H1 (cell line): ENCODE measurements at regions of chr14 and their contacts with region 1.

Region 1: GRCh38 chr14:70096866-70097265 is 91.9 kb downstream of the SLC8A3 start:
- DNase-seq: no peak
- H3K4me3 ChIP-seq: no peak overlapping the region
- H3K27ac ChIP-seq: no peak overlapping the region
- H3K4me1 ChIP-seq: peaks cover 0 to 7% (median under 1%) of the 10 kb centered on the region in 4 experiments; a peak in 2 of 7 replicates
- H3K27me3 ChIP-seq: no peaks in the 10 kb centered on the region
- CTCF ChIP-seq: peak; percentile 64 to 86 (median 74)
- EP300 ChIP-seq: no peak
- POLR2A ChIP-seq: no peak
- RAD21 ChIP-seq: peak; percentile 73 to 86

Region 2: DNA sequence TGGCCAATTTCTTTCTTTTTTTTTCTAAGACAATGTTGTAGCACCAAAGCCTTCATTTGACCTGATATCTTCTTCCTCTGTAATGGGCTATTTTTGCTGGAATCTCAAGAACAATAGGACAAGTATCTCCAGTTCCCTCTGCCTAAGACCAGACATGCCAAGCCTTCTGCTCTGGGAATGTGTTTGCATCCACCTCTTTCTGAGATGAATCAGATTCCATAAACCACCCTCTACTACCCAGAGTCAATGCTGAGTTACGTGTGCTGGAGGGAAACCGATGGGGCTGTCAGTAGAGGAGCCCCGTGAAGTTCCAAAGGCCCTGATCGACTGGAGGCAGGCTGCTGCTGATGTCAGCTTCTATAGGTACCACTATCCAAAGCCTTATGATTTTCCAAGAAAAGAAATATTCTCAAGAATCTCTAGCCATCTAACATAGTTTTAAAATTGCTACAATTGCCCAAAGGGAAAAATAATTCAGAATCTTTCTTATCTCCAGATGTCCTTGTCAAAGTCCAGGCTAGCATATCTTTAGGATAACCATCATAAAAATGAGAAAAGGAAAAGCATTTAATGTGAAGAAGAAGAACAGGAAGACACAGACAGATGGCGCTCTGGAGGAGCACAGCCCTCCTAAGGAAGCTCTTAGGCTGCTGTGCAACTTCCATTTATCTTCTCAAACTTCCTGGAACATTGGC is 10.0 kb before region 1 on chr14:
- CTCF ChIA-PET with region 1: interaction called, 28 read pairs
- POLR2A ChIA-PET with region 1: no interaction called
- DNase-seq: no peak
- H3K4me3 ChIP-seq: no peak overlapping the region
- H3K27ac ChIP-seq: no peak overlapping the region
- H3K4me1 ChIP-seq: no peaks in the 10 kb centered on the region
- H3K27me3 ChIP-seq: no peaks in the 10 kb centered on the region; a peak in 1 of 7 replicates
- CTCF ChIP-seq: peak; percentile 9 to 71 (median 70)
- EP300 ChIP-seq: no peak
- POLR2A ChIP-seq: no peak
- RAD21 ChIP-seq: peak; percentile 76 to 80

Region 3: DNA sequence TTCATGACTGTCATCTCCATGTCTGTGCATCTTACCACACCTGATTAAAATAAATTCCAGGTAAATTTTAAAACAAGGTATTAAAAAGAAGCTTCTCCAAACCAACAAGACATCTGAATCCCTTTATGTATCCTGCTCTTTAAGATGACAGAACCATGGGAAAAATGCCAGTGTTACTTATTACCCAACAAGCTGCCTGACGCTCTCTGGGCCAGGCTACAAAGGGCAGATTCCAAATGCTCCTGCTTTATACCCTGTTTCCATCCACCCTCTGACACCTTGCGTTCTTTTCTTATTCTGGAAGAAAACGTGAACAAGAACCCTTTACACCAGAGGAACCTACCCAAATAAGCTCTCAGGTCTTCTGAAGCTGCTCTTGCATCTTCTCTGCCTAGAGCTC is 21.2 kb after region 1 on chr14:
- CTCF ChIA-PET with region 1: interaction called, 10 read pairs
- POLR2A ChIA-PET with region 1: interaction called, 3 read pairs
- DNase-seq: no peak
- H3K4me3 ChIP-seq: no peak overlapping the region
- H3K27ac ChIP-seq: no peak overlapping the region
- H3K4me1 ChIP-seq: peaks cover 10 to 18% (median 14%) of the 10 kb centered on the region in 4 experiments; a peak in 6 of 7 replicates
- H3K27me3 ChIP-seq: peaks cover 0 to 2% (median 0%) of the 10 kb centered on the region in 4 experiments; a peak in 3 of 7 replicates
- CTCF ChIP-seq: no peak
- EP300 ChIP-seq: no peak
- POLR2A ChIP-seq: no peak
- RAD21 ChIP-seq: no peak